OCI-LY7 (cell line): ENCODE measurements at regions of chr5 and their contacts with region 1.

Region 1: DNA sequence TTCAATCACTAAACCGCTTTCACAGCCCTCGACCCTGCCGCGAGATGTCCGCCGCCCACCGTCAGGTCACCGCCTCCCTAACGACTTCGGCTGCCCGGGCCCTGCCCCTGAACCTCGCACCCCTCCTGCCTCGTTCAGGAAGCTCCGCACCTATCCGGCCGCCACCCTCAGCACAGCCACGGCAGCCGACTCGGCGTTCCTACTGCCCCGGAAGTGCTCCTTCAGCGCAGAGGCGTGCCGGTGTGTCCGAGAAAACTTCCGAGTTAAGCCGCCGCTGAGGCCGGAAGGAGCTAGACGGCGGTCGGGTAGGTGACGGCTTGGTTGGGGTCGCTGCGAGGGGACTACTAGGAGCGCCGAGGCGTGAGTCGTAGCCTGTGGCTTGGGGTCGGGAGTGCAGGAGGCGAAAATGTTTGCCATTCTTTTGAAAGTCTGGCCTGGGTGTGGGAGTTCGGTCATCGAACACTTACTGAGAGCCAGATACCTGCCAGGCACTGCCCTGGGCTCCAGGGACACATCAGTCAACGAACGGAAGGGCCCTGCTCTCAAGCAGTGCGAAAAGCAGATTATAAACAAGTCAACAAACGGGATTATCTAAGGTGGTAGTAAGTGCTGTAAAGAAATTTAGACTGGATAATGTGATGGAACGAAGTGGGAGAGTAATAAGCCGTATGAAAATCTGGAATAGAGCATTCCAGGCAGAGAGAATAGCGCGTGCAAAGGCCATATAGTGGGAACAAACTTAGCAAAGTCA is at the starts of genes FAM114A2 and MFAP3:
- DNase-seq: peak; percentile 93
- H3K4me3 ChIP-seq: peak within 1 kb of the TSS; percentile 91
- H3K27ac ChIP-seq: peak within 1 kb of the TSS; percentile 83
- H3K4me1 ChIP-seq: peaks cover 32% of the 10 kb centered on the region
- CTCF ChIP-seq: no peak
- total RNA-seq, gene FAM114A2: 16.5 and 22.3 TPM in 2 replicates
- total RNA-seq, gene MFAP3: 20.6 and 29.9 TPM in 2 replicates

Region 2: DNA sequence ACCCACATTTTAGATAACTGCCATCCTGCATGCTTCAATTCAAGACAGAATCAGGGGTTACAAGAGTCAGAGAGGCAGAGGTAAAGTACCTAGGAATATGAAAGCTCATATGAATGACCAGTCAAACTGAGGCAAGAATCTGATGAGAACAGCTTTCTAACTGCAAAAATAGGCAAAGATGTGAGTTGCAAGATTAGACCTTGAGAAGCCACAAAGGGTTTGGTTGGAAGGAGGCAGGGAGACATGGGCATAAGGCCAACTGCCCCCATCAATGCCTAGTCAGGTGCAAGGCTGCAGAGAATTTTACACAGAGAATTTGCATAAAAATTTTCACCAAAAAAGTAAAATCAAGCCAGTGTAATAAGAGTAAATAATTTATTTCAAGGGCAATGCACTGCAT is 12.9 kb before region 1 on chr5:
- CTCF ChIA-PET with region 1: no interaction called
- POLR2A ChIA-PET with region 1: interaction called, 33 read pairs
- intact Hi-C with region 1: no loop called
- DNase-seq: no peak
- H3K4me3 ChIP-seq: no peak overlapping the region
- H3K27ac ChIP-seq: no peak overlapping the region
- H3K4me1 ChIP-seq: no peaks in the 10 kb centered on the region
- CTCF ChIP-seq: no peak

Region 3: GRCh38 chr5:154049636-154050035 is 10.8 kb after region 1 on chr5:
- CTCF ChIA-PET with region 1: no interaction called
- POLR2A ChIA-PET with region 1: interaction called, 12 read pairs
- intact Hi-C with region 1: no loop called
- DNase-seq: no peak
- H3K4me3 ChIP-seq: no peak overlapping the region
- H3K27ac ChIP-seq: no peak overlapping the region
- H3K4me1 ChIP-seq: no peaks in the 10 kb centered on the region
- CTCF ChIP-seq: no peak

Region 4: DNA sequence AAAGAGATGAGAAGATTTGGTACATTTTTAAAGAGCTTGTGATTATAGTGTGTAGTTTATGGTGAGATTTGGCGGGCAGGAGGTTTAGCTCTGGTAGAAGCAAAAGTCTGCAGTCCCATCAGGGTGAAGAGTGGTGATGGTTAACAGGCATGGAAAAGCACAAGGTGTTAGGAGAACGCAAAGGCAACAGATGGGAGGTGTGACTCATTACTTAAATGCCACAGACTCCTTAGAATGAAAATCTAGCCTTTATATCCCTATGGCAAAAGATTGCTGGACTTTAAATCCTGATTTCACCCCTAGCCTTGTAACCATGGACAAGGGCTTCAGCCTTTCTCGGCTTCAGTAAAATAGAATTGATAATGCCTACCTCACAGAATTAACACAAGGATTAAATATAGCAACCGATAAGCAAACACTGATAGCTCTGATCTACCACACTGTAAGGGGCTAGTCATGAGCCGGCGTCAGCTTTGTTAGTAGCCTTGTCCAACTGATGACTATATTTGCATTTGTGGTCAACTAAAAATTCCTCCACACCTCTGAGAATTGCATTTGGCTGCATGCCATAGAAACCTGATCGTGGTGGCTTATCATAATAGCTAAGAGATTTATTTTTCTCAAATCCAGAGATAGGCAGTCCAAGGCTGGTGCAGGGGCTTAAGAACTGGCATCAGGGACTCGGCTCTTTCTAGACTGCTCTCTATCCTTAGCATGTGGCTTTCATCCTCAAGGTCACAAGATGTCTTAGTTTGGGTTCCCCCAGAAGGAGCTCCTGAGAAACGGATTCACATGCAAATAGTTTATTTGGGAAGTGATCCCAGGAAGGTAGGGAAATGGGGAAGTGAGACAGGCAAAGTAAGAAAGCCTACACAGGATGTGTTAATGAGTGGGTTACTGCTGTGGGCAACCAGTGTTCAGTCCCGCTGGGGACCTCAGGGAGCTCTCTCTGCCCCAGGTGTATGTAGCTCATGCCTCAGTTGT is 19.5 kb after region 1 on chr5:
- CTCF ChIA-PET with region 1: no interaction called
- POLR2A ChIA-PET with region 1: interaction called, 11 read pairs
- intact Hi-C with region 1: no loop called
- DNase-seq: peak; percentile 46
- H3K4me3 ChIP-seq: peak overlapping the region; percentile 21
- H3K27ac ChIP-seq: peak overlapping the region; percentile 28
- H3K4me1 ChIP-seq: peaks cover 26% of the 10 kb centered on the region
- CTCF ChIP-seq: no peak